ENCODE measurements at regions of chr10 and their contacts with region 1.

Region 1: GRCh38 chr10:6163364-6164270 is 39.1 kb upstream of the PFKFB3 start:
- DNase-seq: peak; percentile 90 to 98
- H3K4me3 ChIP-seq: peak overlapping the region; percentile 97
- H3K4me3 Mint-ChIP-seq: peak overlapping the region; percentile 88
- H3K27ac Mint-ChIP-seq: peak overlapping the region; percentile 98
- H3K4me1 ChIP-seq: peaks cover 20% of the 10 kb centered on the region
- H3K4me1 Mint-ChIP-seq: peaks cover 43% of the 10 kb centered on the region
- H3K27me3 ChIP-seq: no peaks in the 10 kb centered on the region
- H3K27me3 Mint-ChIP-seq: no peaks in the 10 kb centered on the region
- CTCF ChIP-seq: no peak

Region 2: GRCh38 chr10:5534880-5535856 is 628.4 kb before region 1 on chr10:
- CTCF ChIA-PET with region 1: no interaction called
- POLR2A ChIA-PET with region 1: interaction called, 12 read pairs
- intact Hi-C with region 1: no loop called
- DNase-seq: peak in 1 of 2 experiments; percentile 11
- H3K4me3 ChIP-seq: no peak overlapping the region
- H3K4me3 Mint-ChIP-seq: no peak overlapping the region
- H3K27ac Mint-ChIP-seq: no peak overlapping the region
- H3K4me1 ChIP-seq: peaks cover 23% of the 10 kb centered on the region
- H3K4me1 Mint-ChIP-seq: peaks cover 21% of the 10 kb centered on the region
- H3K27me3 ChIP-seq: no peaks in the 10 kb centered on the region
- H3K27me3 Mint-ChIP-seq: no peaks in the 10 kb centered on the region
- CTCF ChIP-seq: no peak

Region 3: DNA sequence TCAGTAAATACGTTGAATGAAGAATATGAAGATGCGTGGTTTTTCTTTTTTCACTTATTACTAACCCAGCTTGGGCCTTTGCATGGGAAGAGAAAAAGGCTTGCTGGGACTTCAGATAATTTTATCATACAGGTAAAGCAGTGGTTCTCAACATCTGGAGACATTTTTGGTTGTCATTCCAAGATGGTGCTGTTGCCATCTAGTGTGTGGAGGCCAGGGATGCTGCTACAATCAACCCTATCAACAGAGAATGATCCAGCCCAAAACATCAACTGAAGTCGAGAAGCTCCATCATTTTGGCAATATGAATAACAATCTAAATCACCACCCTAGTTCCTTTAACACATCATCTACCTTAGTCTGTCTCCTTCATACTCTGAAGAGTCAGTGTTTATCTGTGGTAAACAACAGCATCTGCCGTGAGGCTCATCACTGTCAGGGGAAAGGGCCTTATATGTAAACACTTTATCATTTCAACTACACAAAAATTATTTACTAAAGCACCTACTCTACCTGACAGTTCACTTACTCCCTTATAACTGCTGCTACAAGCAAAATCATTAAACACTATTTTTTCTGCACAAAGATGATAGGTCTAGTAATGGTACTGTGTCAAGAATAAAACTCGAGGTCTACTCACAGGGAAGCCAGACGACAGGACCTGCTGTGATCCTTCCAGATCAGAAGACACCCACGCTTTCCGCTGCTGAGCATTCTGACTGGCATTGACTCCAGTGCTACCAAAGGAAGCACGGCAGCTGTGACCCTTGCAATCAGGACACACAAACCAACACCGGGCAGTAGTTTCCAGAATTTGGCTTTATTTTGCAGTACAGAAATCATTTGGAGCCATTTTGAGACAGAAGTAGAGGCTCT is 399.0 kb before region 1 on chr10:
- CTCF ChIA-PET with region 1: no interaction called
- POLR2A ChIA-PET with region 1: no interaction called
- intact Hi-C with region 1: no loop called
- DNase-seq: no peak
- H3K4me3 ChIP-seq: no peak overlapping the region
- H3K4me3 Mint-ChIP-seq: no peak overlapping the region
- H3K27ac Mint-ChIP-seq: no peak overlapping the region
- H3K4me1 ChIP-seq: no peaks in the 10 kb centered on the region
- H3K4me1 Mint-ChIP-seq: no peaks in the 10 kb centered on the region
- H3K27me3 ChIP-seq: no peaks in the 10 kb centered on the region
- H3K27me3 Mint-ChIP-seq: no peaks in the 10 kb centered on the region
- CTCF ChIP-seq: no peak

Region 4: DNA sequence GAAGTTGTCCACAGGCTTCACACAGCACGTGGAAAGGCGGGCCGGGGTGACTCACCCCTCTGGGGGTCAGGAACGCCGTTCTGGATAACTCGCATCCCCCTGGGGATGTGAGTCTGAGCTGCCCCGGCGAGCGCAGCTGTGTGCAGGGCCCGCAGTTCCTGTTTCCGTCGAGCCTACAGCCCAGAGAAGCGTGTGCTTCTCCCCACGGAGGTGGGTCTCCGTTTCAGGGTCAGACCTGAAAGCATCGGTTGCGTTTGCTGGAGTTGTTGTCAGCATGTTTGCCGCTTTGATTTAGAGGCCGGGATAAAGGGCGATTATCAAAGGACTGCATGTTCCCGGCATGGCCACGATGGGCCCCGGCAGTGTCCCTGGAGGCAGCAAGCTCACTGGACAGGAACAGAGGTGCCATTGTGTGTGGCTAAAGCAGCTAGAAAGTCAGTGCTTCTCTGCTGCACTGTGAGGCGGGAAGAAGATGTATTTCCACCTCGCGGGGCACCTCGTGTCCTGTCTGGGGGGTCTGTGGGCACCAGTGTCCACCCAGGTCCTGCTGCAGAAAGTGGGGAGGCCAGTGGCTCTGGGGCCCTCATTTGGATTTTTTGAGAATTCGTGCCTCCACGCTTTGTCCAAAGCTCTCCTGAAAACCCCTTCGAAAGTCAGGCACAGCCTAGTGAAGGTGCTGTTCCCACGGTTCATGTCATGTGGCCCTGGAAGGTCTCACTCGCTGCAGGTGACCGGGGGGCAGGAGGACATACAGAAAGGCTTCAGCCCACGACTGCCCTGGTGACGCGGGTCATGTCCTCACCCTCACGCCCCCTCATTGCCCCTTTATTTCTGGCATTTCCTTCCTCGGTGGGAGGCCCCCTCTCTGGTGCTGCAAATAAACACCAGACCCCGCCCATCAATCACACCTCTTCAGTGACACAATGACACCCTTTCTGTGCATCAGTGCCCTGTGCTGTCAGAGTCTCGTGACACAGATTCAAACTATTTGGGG is 323.0 kb before region 1 on chr10:
- CTCF ChIA-PET with region 1: no interaction called
- POLR2A ChIA-PET with region 1: no interaction called
- intact Hi-C with region 1: no loop called
- DNase-seq: no peak
- H3K4me3 ChIP-seq: no peak overlapping the region
- H3K4me3 Mint-ChIP-seq: no peak overlapping the region
- H3K27ac Mint-ChIP-seq: no peak overlapping the region
- H3K4me1 ChIP-seq: no peaks in the 10 kb centered on the region
- H3K4me1 Mint-ChIP-seq: peaks cover 9% of the 10 kb centered on the region
- H3K27me3 ChIP-seq: no peaks in the 10 kb centered on the region
- H3K27me3 Mint-ChIP-seq: no peaks in the 10 kb centered on the region
- CTCF ChIP-seq: no peak

Region 5: GRCh38 chr10:6108603-6109443 is 54.8 kb before region 1 on chr10:
- CTCF ChIA-PET with region 1: no interaction called
- POLR2A ChIA-PET with region 1: no interaction called
- intact Hi-C with region 1: loop called (anchors 2 kb)
- DNase-seq: peak in 1 of 2 experiments; percentile 47
- H3K4me3 ChIP-seq: no peak overlapping the region
- H3K4me3 Mint-ChIP-seq: no peak overlapping the region
- H3K27ac Mint-ChIP-seq: no peak overlapping the region
- H3K4me1 ChIP-seq: no peaks in the 10 kb centered on the region
- H3K4me1 Mint-ChIP-seq: no peaks in the 10 kb centered on the region
- H3K27me3 ChIP-seq: no peaks in the 10 kb centered on the region
- H3K27me3 Mint-ChIP-seq: no peaks in the 10 kb centered on the region
- CTCF ChIP-seq: peak; percentile 61 to 85

Region 6: GRCh38 chr10:6144406-6145165 is 19.0 kb before region 1 on chr10:
- CTCF ChIA-PET with region 1: interaction called, 3 read pairs
- POLR2A ChIA-PET with region 1: interaction called, 16 read pairs
- intact Hi-C with region 1: loop called (anchors 1 kb)
- DNase-seq: peak; percentile 88 to 92
- H3K4me3 ChIP-seq: peak overlapping the region; percentile 94
- H3K4me3 Mint-ChIP-seq: peak overlapping the region; percentile 90
- H3K27ac Mint-ChIP-seq: peak overlapping the region; percentile 66
- H3K4me1 ChIP-seq: peaks cover 10% of the 10 kb centered on the region; the same call in 1 of the 2 replicates
- H3K4me1 Mint-ChIP-seq: peaks cover 6% of the 10 kb centered on the region
- H3K27me3 ChIP-seq: no peaks in the 10 kb centered on the region
- H3K27me3 Mint-ChIP-seq: peaks cover 1% of the 10 kb centered on the region
- CTCF ChIP-seq: no peak

Region 7: DNA sequence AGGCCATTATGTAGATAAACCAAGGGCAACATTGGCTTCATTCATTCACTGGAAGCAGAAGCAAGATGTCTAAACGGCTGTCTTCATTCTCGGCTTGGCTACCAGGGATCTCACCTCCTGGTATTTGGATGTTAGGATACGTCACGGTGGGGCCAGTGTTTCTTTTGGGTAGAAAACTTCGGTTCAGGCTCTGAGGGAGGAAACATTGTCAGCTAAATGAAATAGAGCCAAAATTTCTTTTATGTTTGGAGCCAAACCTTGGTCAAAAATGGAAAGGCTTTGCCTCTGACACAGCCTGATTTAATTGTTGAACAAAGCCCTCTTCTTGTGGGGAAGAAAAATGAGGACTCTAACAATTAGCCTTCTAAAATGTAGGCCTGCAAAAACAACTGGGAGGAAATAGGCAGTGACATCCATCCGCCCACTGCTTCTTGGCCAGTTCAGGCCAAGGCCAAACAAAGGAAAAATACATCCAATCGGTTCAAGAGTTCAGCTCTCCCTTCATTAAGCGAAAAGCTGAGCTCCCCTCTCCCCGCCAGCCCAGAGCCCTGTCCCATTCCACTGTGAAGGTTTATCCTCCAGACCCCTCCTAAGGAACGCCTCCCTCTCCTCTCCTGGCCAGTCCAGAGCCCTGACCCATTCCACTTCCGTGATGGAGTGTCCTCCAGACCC is 83.6 kb after region 1 on chr10:
- CTCF ChIA-PET with region 1: no interaction called
- POLR2A ChIA-PET with region 1: no interaction called
- intact Hi-C with region 1: no loop called
- DNase-seq: no peak
- H3K4me3 ChIP-seq: no peak overlapping the region
- H3K4me3 Mint-ChIP-seq: no peak overlapping the region
- H3K27ac Mint-ChIP-seq: no peak overlapping the region
- H3K4me1 ChIP-seq: no peaks in the 10 kb centered on the region
- H3K4me1 Mint-ChIP-seq: no peaks in the 10 kb centered on the region
- H3K27me3 ChIP-seq: no peaks in the 10 kb centered on the region
- H3K27me3 Mint-ChIP-seq: no peaks in the 10 kb centered on the region
- CTCF ChIP-seq: no peak

Measured in Caco-2 (cell line).